ENCODE measurements at regions of chr13 and their contacts with region 1.

Region 1: DNA sequence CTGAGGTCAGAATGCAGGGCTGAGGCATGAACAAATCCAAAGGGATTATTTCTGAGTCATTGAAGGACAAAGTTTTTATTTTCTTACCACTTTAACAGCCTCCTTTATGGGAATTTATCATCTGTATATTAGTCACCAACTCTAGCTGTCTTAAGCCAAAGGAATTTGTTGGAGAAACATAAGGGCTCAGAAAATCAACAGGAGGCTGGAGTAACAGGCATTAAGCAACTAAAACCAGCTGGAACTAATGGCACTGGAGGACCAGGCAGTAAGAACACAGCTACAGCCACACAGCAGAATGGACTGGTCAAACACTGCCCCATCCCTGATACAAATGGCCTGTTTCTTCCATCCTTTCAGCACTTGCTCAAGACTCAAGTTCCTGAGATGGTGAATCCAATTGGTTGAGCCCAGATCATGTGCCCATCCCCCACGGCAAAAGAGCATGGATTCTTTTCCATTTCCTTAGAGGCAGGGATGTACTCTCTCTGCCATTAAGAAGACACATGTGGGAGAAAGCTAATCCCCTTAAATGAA is 157.1 kb upstream of the FNDC3A start:
- DNase-seq: peak in 1 of 2 donors; percentile 72
- H3K4me3 ChIP-seq: no peak overlapping the region
- H3K27ac ChIP-seq: peak overlapping the region; percentile 58 to 65
- H3K4me1 ChIP-seq: peaks cover 0 to 27% of the 10 kb centered on the region in 2 donors
- H3K27me3 ChIP-seq: no peaks in the 10 kb centered on the region
- CTCF ChIP-seq: no peak

Region 2: DNA sequence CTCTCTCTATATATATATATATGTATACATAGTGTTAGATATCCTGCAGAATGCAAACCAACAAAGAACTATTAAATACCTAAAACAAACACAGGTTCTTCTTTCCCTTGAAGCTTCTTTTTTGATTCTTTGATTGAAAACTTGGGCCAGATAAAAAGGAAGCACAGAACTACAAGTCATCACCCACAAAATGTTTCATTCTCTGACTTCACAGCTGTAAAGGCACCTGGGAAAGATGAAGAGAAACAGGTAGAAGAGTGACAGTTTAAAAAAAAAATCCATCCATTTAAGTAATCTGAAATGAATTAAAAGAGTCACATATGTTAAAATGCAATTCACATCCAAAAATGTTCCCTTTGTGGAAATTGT is 66.4 kb after region 1 on chr13:
- intact Hi-C with region 1: loop called (anchors 2 kb)
- DNase-seq: no peak
- H3K4me3 ChIP-seq: no peak overlapping the region
- H3K27ac ChIP-seq: peak overlapping the region; percentile 75
- H3K4me1 ChIP-seq: peaks cover 0 to 8% of the 10 kb centered on the region in 2 donors
- H3K27me3 ChIP-seq: no peaks in the 10 kb centered on the region
- CTCF ChIP-seq: no peak

Region 3: DNA sequence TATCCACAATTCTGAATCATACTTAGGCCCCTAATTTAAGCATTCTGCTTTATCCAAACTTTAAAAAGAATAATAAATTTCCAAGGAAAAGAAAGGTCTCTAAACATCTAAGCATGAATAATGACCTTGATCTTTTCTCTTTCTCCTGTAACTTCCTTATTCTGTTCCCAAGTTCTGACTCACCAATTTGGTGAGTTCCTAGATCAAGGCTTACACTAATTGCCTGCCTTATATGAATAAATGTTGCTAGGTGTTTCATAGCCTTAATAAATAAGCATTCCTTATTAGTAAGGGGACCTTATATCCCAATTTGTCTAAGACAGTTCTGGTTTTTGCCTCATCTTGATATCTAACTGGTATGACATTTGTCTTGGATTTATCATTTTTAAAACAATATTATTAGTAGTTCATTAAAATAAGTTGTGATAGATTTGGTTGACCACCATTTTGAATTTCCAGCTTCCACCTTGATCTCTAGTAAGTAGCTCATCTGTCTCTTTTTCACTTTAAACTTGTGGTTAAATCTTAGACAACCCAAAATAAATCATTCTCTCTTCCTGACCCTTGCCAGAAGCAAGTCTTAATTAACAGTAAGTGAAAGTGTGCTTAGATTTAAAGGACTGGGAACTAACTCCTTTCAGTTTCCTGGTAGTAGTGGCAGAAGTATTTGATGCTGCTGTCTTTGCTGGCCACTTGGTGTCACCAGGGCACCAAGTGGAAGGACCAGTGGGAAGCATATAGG is 280.4 kb after region 1 on chr13:
- intact Hi-C with region 1: loop called (anchors 10 kb)
- DNase-seq: no peak
- H3K4me3 ChIP-seq: no peak overlapping the region
- H3K27ac ChIP-seq: peak overlapping the region; percentile 9 to 43
- H3K4me1 ChIP-seq: peaks cover 13 to 28% of the 10 kb centered on the region in 2 donors
- H3K27me3 ChIP-seq: no peaks in the 10 kb centered on the region
- CTCF ChIP-seq: peak in 1 of 3 experiments; percentile 35

Region 4: GRCh38 chr13:49652355-49653305 is 834.1 kb after region 1 on chr13:
- intact Hi-C with region 1: no loop called
- DNase-seq: no peak
- H3K4me3 ChIP-seq: no peak overlapping the region
- H3K27ac ChIP-seq: no peak overlapping the region
- H3K4me1 ChIP-seq: no peaks in the 10 kb centered on the region
- H3K27me3 ChIP-seq: no peaks in the 10 kb centered on the region
- CTCF ChIP-seq: peak in 2 of 3 experiments; percentile 14 to 30